ENCODE measurements at regions of chr19 and their contacts with region 1.

Region 1: DNA sequence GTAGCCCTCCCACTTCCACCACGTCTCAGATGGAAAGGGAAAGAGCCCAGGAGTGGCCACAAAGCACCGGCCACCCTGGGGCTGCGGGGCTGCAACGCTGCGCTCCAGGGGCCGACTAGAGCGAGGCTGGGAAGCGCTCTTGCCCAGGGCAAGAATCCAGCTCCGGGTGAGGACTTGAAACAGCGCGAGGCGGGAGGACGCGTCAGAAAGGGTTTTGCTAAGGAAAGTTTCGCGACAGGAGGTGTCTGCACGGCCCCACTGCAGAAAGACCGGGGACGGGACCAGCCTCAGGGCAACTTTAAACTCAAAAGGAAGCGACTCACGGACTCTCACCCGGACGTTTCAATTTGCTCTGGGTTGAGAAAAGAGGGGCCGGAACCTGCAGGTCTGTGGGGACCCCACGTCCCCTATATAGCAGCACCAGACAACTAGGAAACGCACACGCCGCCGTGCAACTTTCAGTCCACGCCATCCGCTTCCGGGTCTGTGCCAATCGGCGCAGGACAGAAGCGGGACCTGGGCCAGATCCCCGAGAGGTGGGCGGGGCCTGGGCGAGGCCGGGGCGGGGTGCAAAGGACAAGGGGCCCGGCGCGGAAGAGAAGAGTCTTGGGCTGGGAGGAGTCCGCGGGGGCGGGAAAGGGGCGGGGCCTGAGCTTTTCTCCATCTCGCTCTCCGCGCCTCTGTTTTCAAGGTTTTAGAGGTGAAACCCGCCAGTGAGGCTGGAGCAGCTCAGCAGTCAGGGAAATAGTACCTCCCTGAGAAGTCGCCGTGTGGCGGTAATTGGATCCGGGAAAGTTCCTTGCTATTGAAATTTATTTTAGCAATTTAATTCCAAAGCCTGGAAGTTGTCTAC is at the start of gene ZNF816:
- DNase-seq: peak; percentile 97 to 99
- ATAC-seq: peak; percentile 99 to 100 (median 99)
- H3K4me3 ChIP-seq: peak within 1 kb of the TSS; percentile 68
- H3K4me3 Mint-ChIP-seq: peak within 1 kb of the TSS; percentile 93
- H3K27ac ChIP-seq: peak within 1 kb of the TSS; percentile 66
- H3K27ac Mint-ChIP-seq: peak within 1 kb of the TSS; percentile 89 to 93
- H3K4me1 ChIP-seq: peaks cover 14% of the 10 kb centered on the region
- H3K4me1 Mint-ChIP-seq: peaks cover 34% of the 10 kb centered on the region in 2 donors
- H3K27me3 ChIP-seq: no peaks in the 10 kb centered on the region
- H3K27me3 Mint-ChIP-seq: no peaks in the 10 kb centered on the region
- CTCF ChIP-seq: no peak
- total RNA-seq, gene ZNF816: 4.1 to 11.3 (median 7.7) TPM

Region 2: GRCh38 chr19:52637718-52638585 is 324.7 kb before region 1 on chr19 and contains the start of gene ZNF83:
- intact Hi-C with region 1: loop called (anchors 1 kb)
- DNase-seq: peak; percentile 97
- ATAC-seq: peak; percentile 94 to 99 (median 94)
- H3K4me3 ChIP-seq: peak within 1 kb of the TSS; percentile 57
- H3K4me3 Mint-ChIP-seq: peak within 1 kb of the TSS; percentile 97
- H3K27ac ChIP-seq: peak within 1 kb of the TSS; percentile 82
- H3K27ac Mint-ChIP-seq: peak within 1 kb of the TSS; percentile 96 to 97
- H3K4me1 ChIP-seq: peaks cover 17% of the 10 kb centered on the region
- H3K4me1 Mint-ChIP-seq: peaks cover 28 to 30% of the 10 kb centered on the region in 2 donors
- H3K27me3 ChIP-seq: no peaks in the 10 kb centered on the region
- H3K27me3 Mint-ChIP-seq: no peaks in the 10 kb centered on the region
- CTCF ChIP-seq: no peak
- total RNA-seq, gene ZNF83: 46.8 to 114 (median 96.9) TPM

Region 3: DNA sequence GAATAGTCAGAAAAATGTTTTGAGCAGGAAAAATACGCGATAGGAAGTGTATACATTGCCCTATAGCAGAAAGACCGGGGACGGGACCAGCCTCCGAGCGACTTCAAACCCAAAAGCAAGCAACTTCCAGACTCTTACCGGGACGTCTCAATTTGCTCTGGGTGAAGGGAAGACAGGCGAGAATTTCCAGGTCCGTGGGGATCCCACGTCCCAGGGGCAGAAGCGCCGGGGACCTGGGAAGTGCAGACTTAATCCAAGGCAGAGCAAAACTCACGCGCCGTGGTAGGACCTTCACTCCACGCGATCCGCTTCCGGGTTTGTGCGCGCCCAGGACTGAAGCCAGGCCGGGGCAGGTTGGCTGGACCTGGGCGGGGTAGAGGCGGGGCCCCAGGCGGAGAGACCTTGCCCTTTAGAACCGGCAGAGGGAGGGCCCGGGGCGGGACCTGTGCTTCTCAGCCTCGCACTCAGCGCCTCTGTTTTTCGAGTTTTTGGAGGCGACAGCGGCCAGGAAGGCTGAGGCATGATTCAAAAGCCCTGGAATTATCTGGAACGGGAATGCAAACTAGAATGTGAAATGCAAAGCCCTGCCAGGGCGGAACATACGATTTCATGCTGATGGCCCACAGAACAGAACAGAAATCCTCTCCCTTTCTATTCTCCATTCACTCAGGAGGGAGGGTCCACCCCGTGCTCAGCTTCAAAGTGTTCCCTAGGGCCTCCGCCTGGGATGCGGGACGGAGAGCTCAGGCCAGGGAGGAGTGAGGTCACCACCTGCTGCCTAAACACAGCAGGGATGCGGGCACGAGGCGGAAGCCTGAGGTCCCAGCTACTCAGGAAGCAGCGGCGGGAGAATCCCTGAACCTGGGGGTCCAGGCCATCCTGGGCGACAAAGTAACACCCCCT is 175.9 kb before region 1 on chr19 and contains the start of gene ZNF600:
- intact Hi-C with region 1: loop called (anchors 10 kb)
- DNase-seq: peak; percentile 81
- ATAC-seq: peak; percentile 97 to 98 (median 97)
- H3K4me3 ChIP-seq: peak within 1 kb of the TSS; percentile 88
- H3K4me3 Mint-ChIP-seq: peak within 1 kb of the TSS; percentile 92
- H3K27ac ChIP-seq: peak within 1 kb of the TSS; percentile 70
- H3K27ac Mint-ChIP-seq: peak within 1 kb of the TSS; percentile 57 to 88
- H3K4me1 ChIP-seq: peaks cover 50% of the 10 kb centered on the region
- H3K4me1 Mint-ChIP-seq: peaks cover 53 to 58% of the 10 kb centered on the region in 2 donors
- H3K27me3 ChIP-seq: no peaks in the 10 kb centered on the region
- H3K27me3 Mint-ChIP-seq: no peaks in the 10 kb centered on the region
- CTCF ChIP-seq: no peak
- total RNA-seq, gene ZNF600: 28.8 to 157 (median 73.1) TPM

Region 4: DNA sequence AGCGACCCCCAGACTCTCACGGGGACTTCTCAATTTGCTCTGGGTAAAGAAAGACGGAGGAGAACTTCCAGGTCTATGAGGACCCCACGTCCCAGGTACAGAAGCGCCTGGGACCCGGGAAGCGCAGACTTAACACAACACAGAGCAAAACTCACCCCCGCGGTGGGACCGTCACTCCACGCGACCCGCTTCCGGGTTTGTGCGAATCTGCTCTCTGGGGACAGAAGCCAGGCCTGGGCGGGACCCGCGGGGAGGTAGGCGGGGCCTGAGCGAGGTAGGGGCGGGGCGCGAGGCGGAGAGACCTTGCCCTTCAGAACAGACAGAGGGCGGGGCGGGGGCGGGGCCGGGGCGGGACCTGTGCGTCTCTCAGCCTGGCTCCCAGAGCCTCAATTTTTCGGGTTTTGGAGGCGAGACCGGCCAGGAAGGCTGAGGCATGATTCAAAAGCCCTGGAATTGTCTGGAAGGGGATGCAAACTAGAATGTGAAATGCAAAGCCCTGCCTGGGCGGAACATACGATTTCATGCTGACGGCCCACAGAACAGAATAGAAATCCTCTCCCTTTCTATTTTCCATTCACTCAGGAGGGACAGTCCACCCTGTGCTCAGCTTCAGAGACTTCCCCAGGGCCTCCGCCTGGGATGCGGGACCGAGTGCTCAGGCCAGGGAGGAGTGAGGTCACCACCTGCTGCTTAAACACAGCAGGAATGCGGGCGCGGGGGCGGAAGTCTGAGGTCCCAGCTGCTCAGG is 20.1 kb before region 1 on chr19:
- intact Hi-C with region 1: loop called (anchors 1 kb)
- DNase-seq: peak; percentile 94 to 100
- ATAC-seq: peak; percentile 99 to 100 (median 99)
- H3K4me3 ChIP-seq: peak overlapping the region; percentile 74
- H3K4me3 Mint-ChIP-seq: peak overlapping the region; percentile 97
- H3K27ac ChIP-seq: peak overlapping the region; percentile 75
- H3K27ac Mint-ChIP-seq: peak overlapping the region; percentile 87 to 91
- H3K4me1 ChIP-seq: peaks cover 21% of the 10 kb centered on the region
- H3K4me1 Mint-ChIP-seq: peaks cover 24 to 29% of the 10 kb centered on the region in 2 donors
- H3K27me3 ChIP-seq: no peaks in the 10 kb centered on the region
- H3K27me3 Mint-ChIP-seq: no peaks in the 10 kb centered on the region
- CTCF ChIP-seq: no peak

Region 5: GRCh38 chr19:53103198-53103944 is 140.8 kb after region 1 on chr19 and contains the start of gene ZNF160:
- intact Hi-C with region 1: loop called (anchors 2 kb)
- DNase-seq: peak; percentile 96 to 98
- ATAC-seq: peak; percentile 93 to 98 (median 93)
- H3K4me3 ChIP-seq: peak within 1 kb of the TSS; percentile 81
- H3K4me3 Mint-ChIP-seq: peak within 1 kb of the TSS; percentile 87
- H3K27ac ChIP-seq: peak within 1 kb of the TSS; percentile 94
- H3K27ac Mint-ChIP-seq: peak within 1 kb of the TSS; percentile 86 to 90
- H3K4me1 ChIP-seq: peaks cover 20% of the 10 kb centered on the region
- H3K4me1 Mint-ChIP-seq: peaks cover 28 to 35% of the 10 kb centered on the region in 2 donors
- H3K27me3 ChIP-seq: no peaks in the 10 kb centered on the region
- H3K27me3 Mint-ChIP-seq: no peaks in the 10 kb centered on the region
- CTCF ChIP-seq: no peak
- total RNA-seq, gene ZNF160: 43.9 to 54.9 (median 54.7) TPM

Region 6: GRCh38 chr19:53271955-53272443 is 309.4 kb after region 1 on chr19:
- intact Hi-C with region 1: no loop called
- DNase-seq: no peak
- ATAC-seq: no peak
- H3K4me3 ChIP-seq: no peak overlapping the region
- H3K4me3 Mint-ChIP-seq: no peak overlapping the region
- H3K27ac ChIP-seq: no peak overlapping the region
- H3K27ac Mint-ChIP-seq: no peak overlapping the region
- H3K4me1 ChIP-seq: no peaks in the 10 kb centered on the region
- H3K4me1 Mint-ChIP-seq: no peaks in the 10 kb centered on the region
- H3K27me3 ChIP-seq: no peaks in the 10 kb centered on the region
- H3K27me3 Mint-ChIP-seq: peaks cover 0 to 14% of the 10 kb centered on the region in 2 donors
- CTCF ChIP-seq: no peak